Naive thymus-derived CD4-positive, alpha-beta T cell (primary cell): ENCODE measurements at regions of chr6 and their contacts with region 1.

Region 1: DNA sequence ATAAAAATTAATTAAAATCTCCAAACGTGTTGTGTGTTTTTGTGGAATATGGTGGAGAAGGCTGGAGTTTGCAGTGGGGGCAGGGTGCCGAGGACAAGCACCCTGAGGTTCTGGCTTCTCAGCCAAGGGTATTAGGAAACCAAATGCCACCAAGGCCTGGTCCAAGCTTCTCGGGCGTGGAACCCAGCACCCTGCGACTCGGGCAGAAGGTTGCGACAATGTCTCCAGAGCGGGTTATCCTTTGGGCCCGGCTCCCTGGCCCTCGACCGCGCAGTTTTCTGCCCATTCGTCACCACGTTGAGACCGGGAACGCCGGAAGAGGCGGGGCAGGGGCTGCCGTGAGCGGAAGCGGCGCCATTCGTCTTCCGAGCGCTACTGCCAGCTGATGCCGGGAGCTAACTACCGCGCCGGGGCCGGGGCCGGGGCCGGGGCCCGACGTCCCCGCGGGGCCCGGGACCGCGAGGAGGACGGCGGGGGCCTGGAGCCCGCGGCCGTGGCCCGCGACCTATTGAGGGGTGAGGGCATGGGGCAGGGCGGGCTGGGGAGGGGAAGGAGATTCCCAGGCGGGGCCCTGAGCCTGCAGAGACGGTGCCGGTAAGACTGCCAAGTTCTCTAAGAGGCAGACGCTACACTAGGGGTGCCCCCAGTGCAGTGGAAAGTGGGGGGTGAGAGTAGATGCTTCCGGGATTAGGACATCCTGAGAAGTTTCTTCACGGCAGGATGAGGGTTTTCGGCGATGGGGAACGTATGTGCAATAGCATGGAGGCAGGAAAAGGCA is at the start of gene RRP36:
- DNase-seq: peak; percentile 33 to 76 (median 51)
- ATAC-seq: peak; percentile 88
- H3K4me3 ChIP-seq: peak within 1 kb of the TSS; percentile 89
- H3K4me3 Mint-ChIP-seq: peak within 1 kb of the TSS; percentile 95 to 99 (median 98)
- H3K27ac ChIP-seq: peak within 1 kb of the TSS; percentile 81
- H3K27ac Mint-ChIP-seq: peak within 1 kb of the TSS; percentile 74 to 97 (median 93)
- H3K4me1 ChIP-seq: peaks cover 11 to 19% of the 10 kb centered on the region in 2 donors
- H3K4me1 Mint-ChIP-seq: peaks cover 23 to 60% (median 41%) of the 10 kb centered on the region in 7 donors
- H3K27me3 ChIP-seq: no peaks in the 10 kb centered on the region
- H3K27me3 Mint-ChIP-seq: no peaks in the 10 kb centered on the region
- total RNA-seq, gene RRP36: 25.4 to 66.3 (median 48.4) TPM

Region 2: GRCh38 chr6:43053545-43054205 is 32.2 kb after region 1 on chr6 and contains the start of gene CUL7:
- CTCF ChIA-PET with region 1: interaction called, 4 read pairs
- POLR2A ChIA-PET with region 1: interaction called, 33 read pairs
- intact Hi-C with region 1: loop called (anchors 1 to 2 kb)
- DNase-seq: peak; percentile 72 to 90 (median 88)
- ATAC-seq: peak; percentile 99
- H3K4me3 ChIP-seq: peak within 1 kb of the TSS; percentile 70
- H3K4me3 Mint-ChIP-seq: peak within 1 kb of the TSS; percentile 86 to 99 (median 94)
- H3K27ac ChIP-seq: peak within 1 kb of the TSS; percentile 89
- H3K27ac Mint-ChIP-seq: peak within 1 kb of the TSS; percentile 92 to 99 (median 97)
- H3K4me1 ChIP-seq: peaks cover 8 to 24% of the 10 kb centered on the region in 2 donors
- H3K4me1 Mint-ChIP-seq: peaks cover 37 to 58% (median 50%) of the 10 kb centered on the region in 7 donors
- H3K27me3 ChIP-seq: no peaks in the 10 kb centered on the region
- H3K27me3 Mint-ChIP-seq: no peaks in the 10 kb centered on the region
- total RNA-seq, gene CUL7: 9.8 to 14.5 (median 12.7) TPM